Aorta (tissue), 5 donors: ENCODE measurements at regions of chr1 and their contacts with region 1.

Region 1: DNA sequence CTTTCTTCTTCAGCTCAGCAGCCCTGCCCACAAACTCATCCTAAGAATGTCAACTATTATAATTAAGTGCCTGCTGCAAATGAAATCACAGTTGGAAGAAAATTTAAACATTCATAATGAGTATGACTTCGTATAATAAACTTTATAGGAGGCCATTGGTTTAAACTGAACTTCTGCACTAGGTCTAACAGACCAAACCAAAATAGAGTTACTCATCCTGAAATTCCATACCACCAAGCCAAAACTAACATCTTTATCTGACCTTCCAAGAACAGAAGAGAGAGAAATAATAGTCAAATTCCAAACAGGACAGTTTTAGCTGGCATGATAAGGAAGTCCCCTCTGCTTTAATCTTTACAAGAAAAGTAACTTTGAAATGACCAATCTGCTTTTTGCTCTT is 472.4 kb upstream of the PRMT6 start:
- DNase-seq: no peak
- ATAC-seq: no peak
- H3K4me3 ChIP-seq: no peak overlapping the region
- H3K27ac ChIP-seq: no peak overlapping the region
- H3K4me1 ChIP-seq: no peaks in the 10 kb centered on the region
- H3K27me3 ChIP-seq: no peaks in the 10 kb centered on the region

Region 2: GRCh38 chr1:107750358-107750959 is 1166.4 kb after region 1 on chr1:
- intact Hi-C with region 1: loop called in 1 of 2 experiments (anchors 5 kb)
- DNase-seq: peak in 1 of 2 donors; percentile 59
- ATAC-seq: no peak
- H3K4me3 ChIP-seq: no peak overlapping the region
- H3K27ac ChIP-seq: no peak overlapping the region
- H3K4me1 ChIP-seq: no peaks in the 10 kb centered on the region
- H3K27me3 ChIP-seq: no peaks in the 10 kb centered on the region